IMR-90 (cell line): ENCODE measurements at regions of chr2 and their contacts with region 1.

Region 1: GRCh38 chr2:21395366-21395765 is 271.6 kb downstream of the TDRD15 start:
- DNase-seq: no peak
- ATAC-seq: peak; percentile 21; the same call in 1 of the 2 replicates
- H3K4me3 ChIP-seq: no peak overlapping the region
- H3K27ac ChIP-seq: no peak overlapping the region
- H3K4me1 ChIP-seq: no peaks in the 10 kb centered on the region
- H3K27me3 ChIP-seq: no peaks in the 10 kb centered on the region
- CTCF ChIP-seq: no peak
- POLR2A ChIP-seq: no peak
- RAD21 ChIP-seq: no peak

Region 2: GRCh38 chr2:21070341-21071257 is 324.8 kb before region 1 on chr2:
- CTCF ChIA-PET with region 1: no interaction called
- POLR2A ChIA-PET with region 1: no interaction called
- dilution Hi-C with region 1: no loop called
- in situ Hi-C with region 1: no loop called
- intact Hi-C with region 1: no loop called
- DNase-seq: no peak
- ATAC-seq: no peak
- H3K4me3 ChIP-seq: no peak overlapping the region
- H3K27ac ChIP-seq: no peak overlapping the region
- H3K4me1 ChIP-seq: no peaks in the 10 kb centered on the region
- H3K27me3 ChIP-seq: no peaks in the 10 kb centered on the region
- CTCF ChIP-seq: no peak
- POLR2A ChIP-seq: no peak
- RAD21 ChIP-seq: no peak

Region 3: GRCh38 chr2:21617885-21618434 is 222.6 kb after region 1 on chr2:
- CTCF ChIA-PET with region 1: no interaction called
- POLR2A ChIA-PET with region 1: no interaction called
- dilution Hi-C with region 1: no loop called
- in situ Hi-C with region 1: no loop called
- intact Hi-C with region 1: no loop called
- DNase-seq: no peak
- ATAC-seq: no peak; the same call in 1 of the 2 replicates
- H3K4me3 ChIP-seq: no peak overlapping the region
- H3K27ac ChIP-seq: no peak overlapping the region
- H3K4me1 ChIP-seq: no peaks in the 10 kb centered on the region
- H3K27me3 ChIP-seq: no peaks in the 10 kb centered on the region
- CTCF ChIP-seq: no peak
- POLR2A ChIP-seq: no peak
- RAD21 ChIP-seq: no peak

Region 4: DNA sequence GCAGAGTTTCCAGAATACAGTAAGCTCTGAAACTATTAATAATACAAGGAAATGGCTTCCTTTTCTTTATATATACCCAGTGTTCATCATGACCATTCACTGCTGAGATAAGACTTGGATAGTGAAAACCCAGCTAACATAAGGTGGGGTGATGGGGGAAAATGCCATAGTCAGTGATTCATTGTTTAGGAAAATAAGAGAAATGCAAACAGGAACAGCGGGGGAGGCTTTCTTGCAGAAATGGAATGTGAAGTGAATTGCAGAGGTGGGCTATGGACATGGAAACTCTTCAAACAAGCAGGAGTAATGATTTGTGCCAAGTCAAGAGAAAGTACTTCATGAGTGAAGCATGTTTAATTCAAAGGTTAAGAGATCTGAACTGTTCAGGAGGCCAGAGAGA is 247.8 kb after region 1 on chr2:
- CTCF ChIA-PET with region 1: no interaction called
- POLR2A ChIA-PET with region 1: interaction called, 16 read pairs
- dilution Hi-C with region 1: no loop called
- in situ Hi-C with region 1: no loop called
- intact Hi-C with region 1: no loop called
- DNase-seq: peak; percentile 71
- ATAC-seq: peak; percentile 83
- H3K4me3 ChIP-seq: no peak overlapping the region
- H3K27ac ChIP-seq: no peak overlapping the region; the same call in 1 of the 2 replicates
- H3K4me1 ChIP-seq: peaks cover 10% of the 10 kb centered on the region
- H3K27me3 ChIP-seq: no peaks in the 10 kb centered on the region
- CTCF ChIP-seq: no peak
- POLR2A ChIP-seq: no peak
- RAD21 ChIP-seq: no peak